GM12878 (cell line): ENCODE measurements at regions of chr21 and their contacts with region 1.

Region 1: DNA sequence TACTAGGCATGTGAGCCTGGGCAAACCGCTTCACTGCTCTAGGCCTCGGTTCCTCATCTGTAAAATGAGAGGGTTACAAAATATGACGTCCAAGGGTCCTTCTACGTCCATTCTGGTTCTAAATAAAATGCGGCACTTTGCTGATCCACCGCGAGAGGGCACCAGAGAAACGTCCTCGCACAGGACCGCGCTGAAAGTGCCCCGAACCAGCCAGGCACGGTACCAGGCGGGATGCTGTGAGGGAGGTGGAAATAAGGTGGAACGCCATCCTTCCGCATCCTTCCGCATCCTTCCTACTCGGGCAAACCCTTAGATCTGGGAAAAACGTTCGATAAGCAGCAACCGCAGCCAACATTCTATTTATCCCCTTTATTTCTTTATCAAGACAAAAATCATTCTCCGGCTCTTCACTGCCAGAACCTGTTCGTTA is 60.3 kb upstream of the KRTAP19-8 start:
- DNase-seq: no peak
- ATAC-seq: peak; percentile 91
- H3K4me3 ChIP-seq: no peak overlapping the region
- H3K27ac ChIP-seq: no peak overlapping the region
- H3K4me1 ChIP-seq: 0 out of 2 replicates have a peak, but pooled peaks cover 2% of the 10 kb centered on the region
- H3K27me3 ChIP-seq: no peaks in the 10 kb centered on the region
- CTCF ChIP-seq: peak; percentile 80 to 88 (median 80)
- EP300 ChIP-seq: no peak
- POLR2A ChIP-seq: no peak
- RAD21 ChIP-seq: peak; percentile 86

Region 2: GRCh38 chr21:30900881-30901280 is 197.7 kb before region 1 on chr21:
- CTCF ChIA-PET with region 1: no interaction called
- POLR2A ChIA-PET with region 1: no interaction called
- RAD21 ChIA-PET with region 1: no interaction called
- SMC1A ChIA-PET with region 1: no interaction called
- in situ Hi-C with region 1: no loop called
- intact Hi-C with region 1: no loop called
- DNase-seq: no peak
- ATAC-seq: no peak
- H3K4me3 ChIP-seq: no peak overlapping the region
- H3K27ac ChIP-seq: no peak overlapping the region
- H3K4me1 ChIP-seq: no peaks in the 10 kb centered on the region
- H3K27me3 ChIP-seq: no peaks in the 10 kb centered on the region
- CTCF ChIP-seq: no peak
- EP300 ChIP-seq: no peak
- POLR2A ChIP-seq: no peak
- RAD21 ChIP-seq: no peak

Region 3: GRCh38 chr21:31142600-31142999 is 44.0 kb after region 1 on chr21:
- CTCF ChIA-PET with region 1: interaction called, 5 read pairs
- POLR2A ChIA-PET with region 1: no interaction called
- RAD21 ChIA-PET with region 1: interaction called, 3 read pairs
- SMC1A ChIA-PET with region 1: interaction called, 4 read pairs
- in situ Hi-C with region 1: no loop called
- intact Hi-C with region 1: loop called (anchors 2 kb)
- DNase-seq: no peak
- ATAC-seq: peak; percentile 72
- H3K4me3 ChIP-seq: no peak overlapping the region
- H3K27ac ChIP-seq: no peak overlapping the region
- H3K4me1 ChIP-seq: no peaks in the 10 kb centered on the region; the same call in 1 of the 2 replicates
- H3K27me3 ChIP-seq: no peaks in the 10 kb centered on the region
- CTCF ChIP-seq: peak in 2 of 3 experiments; percentile 18 to 31; a peak in 3 of 6 replicates
- EP300 ChIP-seq: no peak
- POLR2A ChIP-seq: no peak
- RAD21 ChIP-seq: no peak

Region 4: DNA sequence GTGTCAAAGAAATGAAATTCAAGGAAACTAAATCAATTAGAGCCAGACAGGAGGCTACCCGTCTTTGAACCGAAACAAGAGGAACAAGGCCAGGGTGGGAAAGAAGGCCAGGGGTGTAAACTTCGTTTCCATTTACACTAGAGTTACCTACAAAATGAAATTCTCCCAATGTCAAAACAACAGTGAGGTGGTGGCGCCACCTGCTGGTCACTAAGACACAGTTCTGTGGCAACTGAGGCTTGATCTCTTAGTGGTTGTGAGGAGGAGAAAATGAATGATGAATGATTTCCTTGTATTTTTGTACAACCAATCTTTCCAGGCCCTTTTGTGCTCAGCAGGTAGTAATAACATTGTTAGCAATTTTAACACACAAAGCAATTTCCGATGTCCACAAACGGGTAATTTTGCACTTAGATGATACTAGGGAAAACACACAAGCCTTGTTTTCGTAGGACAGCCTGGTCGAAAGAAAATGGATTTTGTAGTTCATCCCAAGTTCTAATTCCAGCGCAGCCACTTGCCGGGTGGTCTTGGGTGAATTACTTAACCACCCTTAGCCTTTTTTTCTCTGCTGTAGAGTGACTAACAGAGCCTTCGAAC is 506.1 kb after region 1 on chr21:
- CTCF ChIA-PET with region 1: interaction called, 9 read pairs
- POLR2A ChIA-PET with region 1: no interaction called
- RAD21 ChIA-PET with region 1: interaction called, 6 read pairs
- SMC1A ChIA-PET with region 1: interaction called, 10 read pairs
- in situ Hi-C with region 1: loop called (anchors 5 kb)
- intact Hi-C with region 1: loop called (anchors 1 kb)
- DNase-seq: peak; percentile 19
- ATAC-seq: peak; percentile 94
- H3K4me3 ChIP-seq: no peak overlapping the region
- H3K27ac ChIP-seq: no peak overlapping the region
- H3K4me1 ChIP-seq: no peaks in the 10 kb centered on the region
- H3K27me3 ChIP-seq: no peaks in the 10 kb centered on the region
- CTCF ChIP-seq: peak; percentile 74 to 87 (median 85)
- EP300 ChIP-seq: no peak
- POLR2A ChIP-seq: no peak
- RAD21 ChIP-seq: peak; percentile 87